ENCODE measurements at regions of chr19 and their contacts with region 1.

Region 1: GRCh38 chr19:54644056-54644455 is 13.8 kb downstream of the LILRB1 start:
- H3K4me3 Mint-ChIP-seq: peak overlapping the region; percentile 71
- H3K27ac Mint-ChIP-seq: peak overlapping the region; percentile 95
- H3K4me1 Mint-ChIP-seq: peaks cover 60% of the 10 kb centered on the region
- H3K27me3 Mint-ChIP-seq: peaks cover 7% of the 10 kb centered on the region

Region 2: DNA sequence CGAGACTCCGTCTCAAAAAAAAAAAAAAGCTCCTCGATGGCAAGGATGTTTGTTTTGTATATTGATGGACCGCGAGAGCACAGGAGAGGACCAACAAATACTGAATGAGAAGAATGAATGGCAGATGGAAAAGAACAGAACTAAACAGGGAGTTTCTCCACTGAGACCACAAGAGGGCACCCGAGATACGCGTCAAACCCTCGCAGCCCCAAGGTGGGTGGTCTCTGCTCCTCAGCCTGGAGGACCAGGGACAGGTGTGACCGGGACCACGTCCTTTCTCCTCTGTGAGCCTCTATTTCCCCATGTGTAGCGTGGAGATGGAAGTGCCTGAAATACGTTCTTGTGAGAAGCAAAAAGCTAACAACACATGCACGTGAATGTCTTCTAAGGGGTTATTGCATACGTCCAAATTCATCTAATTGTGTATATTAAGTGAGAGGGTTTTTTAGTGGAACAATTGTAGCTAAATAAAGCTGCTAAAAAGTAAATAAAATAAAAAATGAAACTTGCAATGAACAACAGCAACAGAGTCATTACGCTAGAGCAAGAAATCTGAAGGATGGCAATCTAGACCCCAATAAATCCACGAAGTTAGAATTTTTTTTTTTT is 162.6 kb before region 1 on chr19:
- intact Hi-C with region 1: loop called (anchors 2 kb)
- H3K4me3 Mint-ChIP-seq: no peak overlapping the region
- H3K27ac Mint-ChIP-seq: no peak overlapping the region
- H3K4me1 Mint-ChIP-seq: peaks cover 65% of the 10 kb centered on the region
- H3K27me3 Mint-ChIP-seq: peaks cover 82% of the 10 kb centered on the region

Region 3: GRCh38 chr19:54606891-54607796 is 36.9 kb before region 1 on chr19:
- intact Hi-C with region 1: loop called (anchors 5 kb)
- H3K4me3 Mint-ChIP-seq: peak overlapping the region; percentile 63
- H3K27ac Mint-ChIP-seq: peak overlapping the region; percentile 83
- H3K4me1 Mint-ChIP-seq: peaks cover 67% of the 10 kb centered on the region
- H3K27me3 Mint-ChIP-seq: peaks cover 7% of the 10 kb centered on the region

Region 4: DNA sequence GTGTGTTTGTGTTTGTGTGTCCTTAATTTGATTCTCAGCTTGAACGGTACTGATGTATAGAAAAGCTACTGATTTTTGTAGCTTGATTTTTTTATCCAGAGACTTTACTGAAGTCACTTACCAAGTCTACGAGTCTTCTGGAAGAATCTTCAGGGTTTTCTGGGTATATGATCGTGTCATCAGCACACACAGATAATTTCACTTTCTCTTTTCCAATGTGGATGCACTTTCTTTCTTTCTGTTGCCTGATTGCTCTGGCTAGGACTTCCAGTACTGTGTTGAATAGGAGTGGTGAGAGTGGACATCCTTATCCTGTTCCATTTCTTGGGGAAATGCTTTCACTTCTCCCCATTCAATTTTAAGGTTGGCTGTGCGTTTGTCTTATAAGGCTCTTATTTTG is 21.6 kb before region 1 on chr19:
- intact Hi-C with region 1: no loop called
- H3K4me3 Mint-ChIP-seq: peak overlapping the region; percentile 45
- H3K27ac Mint-ChIP-seq: peak overlapping the region; percentile 26
- H3K4me1 Mint-ChIP-seq: peaks cover 58% of the 10 kb centered on the region
- H3K27me3 Mint-ChIP-seq: peaks cover 6% of the 10 kb centered on the region